ENCODE measurements at regions of chr10 and their contacts with region 1.

Region 1: GRCh38 chr10:25875556-25876165 is 58.4 kb upstream of the MYO3A start:
- DNase-seq: peak; percentile 67 to 79
- H3K4me3 ChIP-seq: no peak overlapping the region
- H3K27ac ChIP-seq: no peak overlapping the region
- H3K4me1 ChIP-seq: no peaks in the 10 kb centered on the region
- H3K27me3 ChIP-seq: no peaks in the 10 kb centered on the region
- CTCF ChIP-seq: peak; percentile 72 to 87

Region 2: DNA sequence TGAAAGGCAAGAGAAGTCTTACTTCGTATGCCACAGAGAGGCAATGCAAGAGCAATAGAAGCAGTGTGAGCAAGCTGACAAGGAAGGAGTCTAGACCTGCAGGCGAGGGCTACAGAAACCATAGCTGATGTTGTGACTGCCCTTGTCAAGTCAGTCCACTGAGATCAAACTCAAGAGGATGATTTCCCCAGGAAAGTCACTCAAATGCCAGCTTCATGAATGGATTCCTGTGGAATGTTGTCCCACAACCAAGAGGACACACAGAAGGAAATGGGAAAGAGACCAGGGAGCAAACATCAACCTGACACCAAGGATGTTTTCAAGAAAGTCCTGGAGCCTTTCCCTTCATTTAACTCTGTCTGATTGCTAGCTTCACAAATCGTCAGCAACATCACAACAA is 263.0 kb after region 1 on chr10:
- intact Hi-C with region 1: loop called (anchors 10 kb)
- DNase-seq: no peak
- H3K4me3 ChIP-seq: no peak overlapping the region
- H3K27ac ChIP-seq: no peak overlapping the region
- H3K4me1 ChIP-seq: no peaks in the 10 kb centered on the region
- H3K27me3 ChIP-seq: no peaks in the 10 kb centered on the region
- CTCF ChIP-seq: no peak

Region 3: DNA sequence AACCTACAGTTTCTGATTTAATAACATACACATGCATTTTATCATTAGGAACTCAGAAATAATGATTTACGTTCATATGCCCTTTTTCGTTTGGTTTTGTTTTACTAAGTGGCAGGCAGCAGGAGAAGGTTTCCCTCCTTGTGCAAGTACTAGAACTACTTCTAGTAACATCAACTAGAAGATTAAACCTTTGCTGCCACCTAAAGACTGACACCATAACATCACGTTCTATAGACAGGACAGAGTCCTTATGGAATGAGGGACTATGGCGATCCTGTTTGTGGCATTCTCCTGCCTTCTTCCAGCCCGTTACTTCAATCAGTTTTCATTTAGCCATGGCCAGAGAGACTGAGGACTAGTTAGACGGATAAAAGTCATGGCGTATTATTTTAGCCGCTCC is 394.1 kb after region 1 on chr10:
- intact Hi-C with region 1: loop called (anchors 10 kb)
- DNase-seq: no peak
- H3K4me3 ChIP-seq: no peak overlapping the region
- H3K27ac ChIP-seq: no peak overlapping the region
- H3K4me1 ChIP-seq: peaks cover 0 to 12% (median 5%) of the 10 kb centered on the region in 4 donors
- H3K27me3 ChIP-seq: peaks cover 0 to 7% of the 10 kb centered on the region in 2 donors
- CTCF ChIP-seq: peak in 1 of 2 experiments; percentile 36

Region 4: DNA sequence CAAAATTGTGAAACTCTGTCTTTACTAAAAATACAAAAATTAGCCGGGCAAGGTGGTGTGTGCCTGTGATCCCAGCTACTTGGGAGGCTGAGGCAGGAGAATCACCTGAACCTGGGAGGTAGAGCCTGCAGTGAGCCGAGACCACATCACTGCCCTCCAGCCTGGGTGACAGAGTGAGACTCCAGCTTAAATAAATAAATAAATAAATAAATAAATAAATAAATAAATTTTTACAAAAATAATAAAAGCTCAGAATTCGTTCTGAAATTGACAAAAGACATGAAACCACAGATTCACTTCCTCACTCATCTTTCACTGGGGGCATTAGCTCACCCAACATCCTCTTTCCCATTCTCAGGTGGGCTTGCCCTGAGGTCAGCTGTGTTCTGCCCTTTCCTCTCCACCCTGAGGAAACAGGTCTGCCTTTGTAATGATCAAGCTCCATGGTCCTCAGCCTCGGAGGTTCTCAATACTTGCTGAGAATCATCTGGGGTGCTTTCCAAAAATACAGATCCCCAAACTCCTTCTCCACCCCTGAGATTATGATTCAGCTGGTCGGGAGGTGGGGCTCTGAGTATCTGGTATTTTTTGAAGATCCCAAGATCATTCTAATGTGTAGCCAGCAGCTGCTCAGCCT is 533.3 kb after region 1 on chr10:
- intact Hi-C with region 1: no loop called
- DNase-seq: no peak
- H3K4me3 ChIP-seq: no peak overlapping the region
- H3K27ac ChIP-seq: no peak overlapping the region
- H3K4me1 ChIP-seq: no peaks in the 10 kb centered on the region
- H3K27me3 ChIP-seq: no peaks in the 10 kb centered on the region
- CTCF ChIP-seq: no peak

Measured in tibial artery (tissue), 4 donors.